IMR-90 (cell line): ENCODE measurements at regions of chr17 and their contacts with region 1.

Region 1: DNA sequence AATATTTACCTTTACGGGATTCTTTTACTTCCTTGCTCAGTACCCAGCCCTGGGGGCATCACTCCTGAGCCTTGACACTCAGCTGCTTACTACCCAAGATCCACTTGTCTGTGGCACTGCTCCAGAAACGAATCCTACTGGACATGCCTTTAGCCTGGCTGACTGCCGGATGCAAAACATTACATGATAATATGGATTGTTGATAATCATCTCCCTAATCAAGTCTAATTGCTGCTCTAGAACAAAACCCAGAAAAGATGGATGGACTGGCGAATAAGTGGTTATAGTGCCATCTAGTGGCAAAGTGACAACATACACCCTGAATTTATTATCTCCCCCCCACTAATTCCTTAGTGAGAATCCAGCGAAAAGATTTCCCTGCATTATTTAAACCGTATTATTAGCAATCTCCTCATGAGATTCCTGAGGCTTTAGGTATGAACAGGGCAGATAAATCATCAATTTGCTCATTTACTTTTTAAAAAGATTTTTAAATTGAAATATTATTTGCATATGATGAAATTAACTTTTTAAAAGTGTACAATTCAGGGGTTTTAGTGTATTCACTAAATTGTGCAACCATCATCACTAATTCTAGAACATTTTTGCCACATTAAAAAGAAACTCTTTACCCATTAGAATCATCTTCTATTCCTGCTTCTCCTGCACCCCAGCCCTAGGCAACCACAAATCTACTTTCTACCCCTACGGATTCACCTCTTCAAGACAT is 61.6 kb downstream of the RGS9 start:
- DNase-seq: peak; percentile 69
- ATAC-seq: peak; percentile 70; the same call in 1 of the 2 replicates
- H3K4me3 ChIP-seq: no peak overlapping the region
- H3K27ac ChIP-seq: no peak overlapping the region
- H3K4me1 ChIP-seq: no peaks in the 10 kb centered on the region; the same call in 1 of the 2 replicates
- H3K27me3 ChIP-seq: no peaks in the 10 kb centered on the region; the same call in 1 of the 2 replicates
- CTCF ChIP-seq: peak; percentile 89
- POLR2A ChIP-seq: no peak
- RAD21 ChIP-seq: peak; percentile 91

Region 2: GRCh38 chr17:64506576-64507477 is 692.0 kb before region 1 on chr17 and contains the start of gene CEP95:
- CTCF ChIA-PET with region 1: no interaction called
- POLR2A ChIA-PET with region 1: interaction called, 12 read pairs
- dilution Hi-C with region 1: no loop called
- in situ Hi-C with region 1: no loop called
- intact Hi-C with region 1: no loop called
- DNase-seq: peak; percentile 98
- ATAC-seq: peak; percentile 70
- H3K4me3 ChIP-seq: peak within 1 kb of the TSS; percentile 93
- H3K27ac ChIP-seq: peak within 1 kb of the TSS; percentile 94
- H3K4me1 ChIP-seq: peaks cover 2% of the 10 kb centered on the region; the same call in 1 of the 2 replicates
- H3K27me3 ChIP-seq: no peaks in the 10 kb centered on the region
- CTCF ChIP-seq: 0 out of 2 replicates have a peak, but pooled peaks have one; percentile 0
- POLR2A ChIP-seq: peak; percentile 87
- RAD21 ChIP-seq: no peak
- total RNA-seq, gene CEP95: 6.1 and 13.3 TPM in 2 replicates

Region 3: GRCh38 chr17:64968652-64969501 is 229.9 kb before region 1 on chr17:
- CTCF ChIA-PET with region 1: interaction called, 3 read pairs
- POLR2A ChIA-PET with region 1: no interaction called
- dilution Hi-C with region 1: no loop called
- in situ Hi-C with region 1: no loop called
- intact Hi-C with region 1: loop called (anchors 2 kb)
- DNase-seq: no peak
- ATAC-seq: no peak
- H3K4me3 ChIP-seq: no peak overlapping the region
- H3K27ac ChIP-seq: no peak overlapping the region
- H3K4me1 ChIP-seq: peaks cover 1% of the 10 kb centered on the region; the same call in 1 of the 2 replicates
- H3K27me3 ChIP-seq: no peaks in the 10 kb centered on the region
- CTCF ChIP-seq: no peak
- POLR2A ChIP-seq: no peak
- RAD21 ChIP-seq: no peak

Region 4: DNA sequence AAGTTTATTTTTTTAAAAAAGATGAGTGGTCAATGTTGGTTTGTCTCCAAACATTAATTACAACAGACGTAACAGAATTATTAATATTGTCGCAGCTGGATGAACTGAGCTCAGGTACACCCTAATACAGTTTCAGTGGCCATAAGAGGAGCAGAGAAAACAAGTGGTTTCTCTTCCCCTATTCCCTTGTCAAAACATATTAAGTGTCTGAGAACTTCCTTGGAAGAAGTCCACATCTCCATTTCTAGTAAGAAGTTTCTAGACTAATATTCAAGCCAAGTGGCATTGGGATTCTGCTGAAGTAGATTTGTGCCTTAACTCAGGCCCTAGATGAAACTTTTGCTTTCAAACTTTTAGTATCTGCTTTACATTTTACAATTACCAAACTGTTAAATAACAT is 189.9 kb before region 1 on chr17:
- CTCF ChIA-PET with region 1: no interaction called
- POLR2A ChIA-PET with region 1: no interaction called
- dilution Hi-C with region 1: no loop called
- in situ Hi-C with region 1: no loop called
- intact Hi-C with region 1: no loop called
- DNase-seq: no peak
- ATAC-seq: no peak
- H3K4me3 ChIP-seq: no peak overlapping the region
- H3K27ac ChIP-seq: no peak overlapping the region
- H3K4me1 ChIP-seq: peaks cover 4% of the 10 kb centered on the region; the same call in 1 of the 2 replicates
- H3K27me3 ChIP-seq: no peaks in the 10 kb centered on the region
- CTCF ChIP-seq: no peak
- POLR2A ChIP-seq: no peak
- RAD21 ChIP-seq: no peak

Region 5: DNA sequence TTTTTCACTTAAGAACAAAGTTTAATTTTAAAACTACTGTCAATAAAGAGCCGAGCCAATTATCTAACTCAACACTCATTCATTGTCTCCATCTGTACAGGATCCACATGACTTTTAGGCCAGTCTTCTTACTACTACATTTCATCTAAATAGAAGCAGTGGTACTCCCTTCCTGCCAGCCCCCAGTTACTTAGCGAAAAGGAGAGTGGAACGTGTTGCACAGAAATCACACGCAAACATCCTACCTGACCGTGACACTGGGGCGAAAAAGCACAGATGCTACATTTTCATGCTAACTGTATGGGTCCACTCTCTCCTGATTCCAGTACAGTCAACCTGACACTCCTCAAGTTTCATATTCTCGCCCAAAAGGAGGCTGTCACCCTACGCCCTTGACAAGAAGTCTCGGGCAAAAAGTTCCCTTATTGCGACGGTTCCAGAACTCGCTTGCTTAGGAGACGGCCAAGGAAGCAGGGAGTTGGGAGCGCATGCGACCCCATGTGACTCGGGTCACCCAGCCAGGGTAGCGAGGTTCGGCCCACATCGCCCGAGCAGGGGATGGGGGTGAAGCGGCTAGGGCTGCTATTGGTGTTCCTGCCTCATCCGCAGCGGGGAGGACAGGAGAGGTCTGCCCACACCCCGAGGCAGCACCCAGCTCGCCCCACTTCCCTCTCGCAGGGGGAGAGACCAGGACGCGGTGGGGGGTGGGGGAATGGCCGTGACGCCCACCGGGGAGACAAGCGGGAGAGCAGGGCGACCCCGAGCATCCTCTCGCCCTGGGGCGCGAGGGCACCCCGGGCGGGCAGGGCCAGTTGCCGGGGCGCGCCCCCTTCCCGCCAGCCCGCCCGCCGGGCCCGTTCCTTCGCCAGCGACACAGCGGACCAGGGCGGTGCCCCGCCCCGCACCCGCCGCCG is 143.2 kb before region 1 on chr17:
- CTCF ChIA-PET with region 1: no interaction called
- POLR2A ChIA-PET with region 1: no interaction called
- dilution Hi-C with region 1: no loop called
- in situ Hi-C with region 1: no loop called
- intact Hi-C with region 1: loop called (anchors 2 kb)
- DNase-seq: peak; percentile 22
- ATAC-seq: peak; percentile 38
- H3K4me3 ChIP-seq: peak overlapping the region; percentile 91
- H3K27ac ChIP-seq: peak overlapping the region; percentile 100
- H3K4me1 ChIP-seq: peaks cover 2% of the 10 kb centered on the region; the same call in 1 of the 2 replicates
- H3K27me3 ChIP-seq: no peaks in the 10 kb centered on the region
- CTCF ChIP-seq: no peak
- POLR2A ChIP-seq: no peak
- RAD21 ChIP-seq: no peak; the same call in none of the 2 replicates

Region 6: GRCh38 chr17:65122836-65123756 is 75.7 kb before region 1 on chr17:
- CTCF ChIA-PET with region 1: no interaction called
- POLR2A ChIA-PET with region 1: no interaction called
- dilution Hi-C with region 1: no loop called
- in situ Hi-C with region 1: no loop called
- intact Hi-C with region 1: loop called (anchors 5 kb)
- DNase-seq: peak; percentile 90
- ATAC-seq: peak; percentile 97
- H3K4me3 ChIP-seq: peak overlapping the region; percentile 55
- H3K27ac ChIP-seq: peak overlapping the region; percentile 98
- H3K4me1 ChIP-seq: peaks cover 8% of the 10 kb centered on the region
- H3K27me3 ChIP-seq: no peaks in the 10 kb centered on the region
- CTCF ChIP-seq: no peak
- POLR2A ChIP-seq: peak; percentile 83
- RAD21 ChIP-seq: no peak